Activated B cell treated with CpG ODN at 0.5 μM for 24 hours (primary cell): ENCODE measurements at regions of chr3 and their contacts with region 1.

Region 1: DNA sequence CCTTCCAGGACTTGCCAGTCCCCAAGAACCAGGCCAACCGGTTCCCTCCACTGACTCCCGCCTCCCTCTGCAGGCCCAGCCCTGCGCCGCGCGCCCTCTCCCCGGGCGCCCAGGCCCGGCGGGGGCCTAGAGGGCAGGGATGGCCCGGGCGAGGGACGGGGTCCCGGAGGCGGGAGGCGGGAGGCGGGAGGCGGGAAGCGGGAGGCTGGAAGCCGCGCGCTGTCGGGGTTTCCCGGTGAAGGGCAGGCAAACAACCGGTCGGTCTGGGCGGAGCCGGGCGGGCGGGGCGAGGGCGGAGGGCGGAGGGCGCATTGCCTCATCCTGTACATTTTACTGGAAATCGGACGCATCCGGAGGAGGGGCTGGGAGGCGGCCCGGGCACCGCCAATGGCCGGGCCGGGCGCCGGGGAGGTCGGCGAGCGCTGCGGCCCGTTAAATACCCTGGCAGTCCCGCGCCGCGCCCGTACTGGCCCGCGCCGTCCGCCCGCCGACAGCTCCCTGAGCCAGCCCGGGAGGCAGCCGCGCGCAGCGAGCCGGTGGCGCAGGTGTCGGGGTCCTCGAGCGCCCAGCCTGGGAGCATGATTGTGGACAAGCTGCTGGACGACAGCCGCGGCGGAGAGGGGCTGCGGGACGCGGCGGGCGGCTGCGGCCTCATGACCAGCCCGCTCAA is at the start of gene NFKBIZ:
- DNase-seq: peak; percentile 87
- ATAC-seq: peak; percentile 82
- H3K4me3 Mint-ChIP-seq: peak within 1 kb of the TSS; percentile 98
- H3K27ac Mint-ChIP-seq: peak within 1 kb of the TSS; percentile 96
- H3K4me1 Mint-ChIP-seq: peaks cover 63% of the 10 kb centered on the region
- H3K27me3 Mint-ChIP-seq: no peaks in the 10 kb centered on the region
- CTCF ChIP-seq: no peak
- total RNA-seq, gene NFKBIZ: 391 and 421 TPM in 2 replicates

Region 2: GRCh38 chr3:101809178-101810021 is 39.8 kb before region 1 on chr3:
- CTCF ChIA-PET with region 1: interaction called, 16 read pairs
- POLR2A ChIA-PET with region 1: interaction called, 37 read pairs
- intact Hi-C with region 1: loop called (anchors 1 kb)
- DNase-seq: no peak
- ATAC-seq: peak; percentile 82
- H3K4me3 Mint-ChIP-seq: no peak overlapping the region
- H3K27ac Mint-ChIP-seq: no peak overlapping the region
- H3K4me1 Mint-ChIP-seq: peaks cover 37% of the 10 kb centered on the region
- H3K27me3 Mint-ChIP-seq: no peaks in the 10 kb centered on the region
- CTCF ChIP-seq: peak; percentile 59

Region 3: DNA sequence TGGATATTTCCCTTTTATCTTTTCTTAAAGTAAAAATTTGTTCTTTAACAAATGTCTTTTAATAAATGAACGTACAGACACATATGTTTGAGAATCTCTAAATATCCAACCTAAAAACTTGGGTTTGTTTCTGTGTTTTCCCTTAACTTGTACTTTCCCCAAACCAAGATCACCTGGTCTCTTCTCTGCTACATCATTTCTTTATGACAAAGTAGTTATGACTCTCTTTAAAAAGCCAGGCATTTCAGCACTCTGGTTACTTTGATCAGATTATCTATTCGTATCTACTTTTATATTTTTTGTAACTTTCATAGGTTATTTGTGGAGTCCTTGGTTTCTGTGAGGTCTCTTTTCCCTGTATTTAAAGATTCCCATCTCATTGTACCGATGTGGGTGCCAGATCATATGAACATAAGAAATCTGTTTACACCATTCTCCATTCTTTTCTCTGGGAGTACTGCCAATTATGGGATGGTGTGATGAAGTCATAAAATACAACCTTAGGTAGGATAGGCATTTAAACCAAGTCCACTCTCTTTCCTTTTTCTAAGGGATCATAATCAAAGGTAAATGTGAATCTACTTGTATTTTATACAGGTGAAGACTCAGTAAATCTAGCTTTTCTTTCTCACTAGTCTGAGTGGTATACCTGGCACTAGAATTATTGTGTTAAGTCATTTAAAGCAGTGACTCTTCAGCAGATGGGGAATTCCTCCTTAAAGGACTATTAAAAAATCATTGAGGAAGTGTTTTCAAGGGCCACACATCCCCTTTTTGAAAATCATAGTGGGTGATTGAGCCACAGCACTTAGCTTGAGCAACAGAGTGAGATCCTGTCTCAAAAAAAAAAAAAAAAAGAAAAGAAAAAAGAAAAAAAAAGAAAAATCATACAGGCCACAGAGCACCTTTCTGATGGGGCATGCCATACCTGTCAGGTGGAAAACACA is 12.3 kb before region 1 on chr3:
- CTCF ChIA-PET with region 1: interaction called, 6 read pairs
- POLR2A ChIA-PET with region 1: interaction called, 197 read pairs
- intact Hi-C with region 1: loop called (anchors 1 kb)
- DNase-seq: no peak
- ATAC-seq: peak; percentile 84
- H3K4me3 Mint-ChIP-seq: peak overlapping the region; percentile 79
- H3K27ac Mint-ChIP-seq: peak overlapping the region; percentile 85
- H3K4me1 Mint-ChIP-seq: peaks cover 91% of the 10 kb centered on the region
- H3K27me3 Mint-ChIP-seq: no peaks in the 10 kb centered on the region
- CTCF ChIP-seq: no peak

Region 4: GRCh38 chr3:101876142-101876541 is 27.0 kb after region 1 on chr3:
- CTCF ChIA-PET with region 1: no interaction called
- POLR2A ChIA-PET with region 1: interaction called, 11 read pairs
- intact Hi-C with region 1: no loop called
- DNase-seq: no peak
- ATAC-seq: peak; percentile 72
- H3K4me3 Mint-ChIP-seq: peak overlapping the region; percentile 21
- H3K27ac Mint-ChIP-seq: peak overlapping the region; percentile 81
- H3K4me1 Mint-ChIP-seq: peaks cover 51% of the 10 kb centered on the region
- H3K27me3 Mint-ChIP-seq: no peaks in the 10 kb centered on the region
- CTCF ChIP-seq: no peak

Region 5: DNA sequence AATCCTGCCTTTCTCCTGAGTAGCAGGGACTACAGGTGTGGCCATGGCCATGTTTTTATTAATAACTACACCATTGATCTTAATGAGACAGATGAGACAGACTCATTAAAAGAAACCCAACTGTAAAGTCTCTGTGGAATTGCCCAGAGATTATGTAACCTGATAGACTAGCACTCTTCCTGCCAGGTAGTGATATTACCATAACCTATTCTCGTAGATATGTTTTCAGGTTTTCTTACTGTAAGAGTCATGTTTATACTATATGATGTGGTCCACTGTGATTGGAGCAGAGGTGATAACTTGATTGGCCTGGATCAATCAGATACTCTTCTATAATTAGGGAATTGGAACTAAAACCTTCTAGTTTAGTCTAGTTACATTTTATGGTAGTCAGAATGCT is 93.8 kb after region 1 on chr3:
- CTCF ChIA-PET with region 1: interaction called, 3 read pairs
- POLR2A ChIA-PET with region 1: interaction called, 84 read pairs
- intact Hi-C with region 1: no loop called
- DNase-seq: no peak
- ATAC-seq: peak; percentile 47
- H3K4me3 Mint-ChIP-seq: peak overlapping the region; percentile 36
- H3K27ac Mint-ChIP-seq: peak overlapping the region; percentile 85
- H3K4me1 Mint-ChIP-seq: peaks cover 38% of the 10 kb centered on the region
- H3K27me3 Mint-ChIP-seq: no peaks in the 10 kb centered on the region
- CTCF ChIP-seq: no peak

Region 6: DNA sequence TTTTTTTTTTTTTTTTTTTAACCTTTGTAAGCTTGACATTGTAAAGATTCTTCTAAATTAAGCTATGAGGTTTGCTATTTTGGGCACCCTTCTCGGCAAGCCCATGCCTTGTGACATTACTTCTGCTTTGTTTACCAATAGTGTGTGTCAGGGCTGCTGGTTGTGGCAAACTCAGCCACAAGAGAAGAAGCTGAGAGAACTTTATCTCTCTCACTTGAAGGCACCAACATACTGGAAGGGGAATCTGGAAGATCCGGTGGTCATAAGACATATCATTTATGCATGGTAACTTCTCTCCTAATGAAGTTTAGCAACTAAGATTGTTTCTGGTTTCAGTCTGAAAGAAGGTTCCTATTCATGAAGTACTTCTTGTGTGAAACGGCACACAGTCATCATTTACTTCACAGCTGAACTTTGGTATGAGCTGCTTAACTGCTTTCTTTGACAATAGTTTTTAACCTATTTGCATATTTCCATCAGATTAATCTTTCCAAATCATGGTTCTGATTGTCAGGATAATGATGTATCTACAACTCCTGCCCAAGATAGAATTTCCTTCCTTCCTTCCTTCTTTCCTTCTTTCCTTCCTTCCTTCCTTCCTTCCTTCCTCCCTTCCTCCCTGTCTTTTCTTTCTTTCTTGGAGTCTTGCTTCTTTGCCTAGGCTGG is 189.4 kb after region 1 on chr3:
- CTCF ChIA-PET with region 1: interaction called, 3 read pairs
- POLR2A ChIA-PET with region 1: interaction called, 22 read pairs
- intact Hi-C with region 1: no loop called
- DNase-seq: no peak
- ATAC-seq: peak; percentile 82
- H3K4me3 Mint-ChIP-seq: peak overlapping the region; percentile 56
- H3K27ac Mint-ChIP-seq: peak overlapping the region; percentile 91
- H3K4me1 Mint-ChIP-seq: peaks cover 43% of the 10 kb centered on the region
- H3K27me3 Mint-ChIP-seq: no peaks in the 10 kb centered on the region
- CTCF ChIP-seq: no peak

Region 7: DNA sequence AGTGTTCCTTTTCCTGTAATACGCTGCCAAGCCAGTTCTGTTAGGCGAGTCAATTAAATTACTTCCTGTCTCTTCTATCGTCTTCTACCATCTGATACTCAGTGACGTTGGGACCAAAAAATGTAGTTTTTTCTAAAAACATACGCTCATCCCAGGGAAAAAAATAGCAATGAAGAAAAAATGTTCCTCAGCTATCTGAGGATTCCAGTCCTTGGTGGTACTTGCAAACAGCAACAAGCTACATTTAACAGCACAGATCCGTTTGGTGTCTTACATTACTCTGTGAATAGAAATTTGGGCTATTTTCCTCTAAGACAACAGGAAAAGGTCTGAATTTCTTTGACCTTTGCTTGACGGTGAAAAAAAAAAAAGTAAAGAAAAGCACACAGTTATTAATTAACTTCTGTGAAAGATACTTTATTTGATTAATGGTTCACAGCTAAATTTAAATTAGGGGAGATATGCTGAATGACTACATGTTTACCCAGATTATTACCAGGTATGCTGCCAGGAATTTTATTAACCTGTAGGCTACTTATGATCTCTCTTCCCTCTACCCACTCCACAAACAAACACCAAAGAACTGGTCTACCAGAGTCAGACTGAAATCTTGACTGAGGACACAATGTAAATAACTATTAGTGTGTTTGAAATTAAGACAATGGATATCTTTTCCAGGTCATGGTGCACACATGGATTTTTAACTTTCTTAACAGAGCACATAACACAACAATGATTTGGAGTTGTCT is 331.3 kb after region 1 on chr3:
- CTCF ChIA-PET with region 1: no interaction called
- POLR2A ChIA-PET with region 1: interaction called, 14 read pairs
- intact Hi-C with region 1: no loop called
- DNase-seq: no peak
- ATAC-seq: peak; percentile 40
- H3K4me3 Mint-ChIP-seq: no peak overlapping the region
- H3K27ac Mint-ChIP-seq: no peak overlapping the region
- H3K4me1 Mint-ChIP-seq: peaks cover 6% of the 10 kb centered on the region
- H3K27me3 Mint-ChIP-seq: no peaks in the 10 kb centered on the region
- CTCF ChIP-seq: no peak

Region 8: GRCh38 chr3:102444101-102444500 is 594.9 kb after region 1 on chr3:
- CTCF ChIA-PET with region 1: no interaction called
- POLR2A ChIA-PET with region 1: no interaction called
- intact Hi-C with region 1: no loop called
- DNase-seq: no peak
- ATAC-seq: no peak
- H3K4me3 Mint-ChIP-seq: no peak overlapping the region
- H3K27ac Mint-ChIP-seq: no peak overlapping the region
- H3K4me1 Mint-ChIP-seq: no peaks in the 10 kb centered on the region
- H3K27me3 Mint-ChIP-seq: no peaks in the 10 kb centered on the region
- CTCF ChIP-seq: no peak